Head of caudate nucleus (tissue), 42 donors: ENCODE measurements at regions of chr14 and their contacts with region 1.

Region 1: DNA sequence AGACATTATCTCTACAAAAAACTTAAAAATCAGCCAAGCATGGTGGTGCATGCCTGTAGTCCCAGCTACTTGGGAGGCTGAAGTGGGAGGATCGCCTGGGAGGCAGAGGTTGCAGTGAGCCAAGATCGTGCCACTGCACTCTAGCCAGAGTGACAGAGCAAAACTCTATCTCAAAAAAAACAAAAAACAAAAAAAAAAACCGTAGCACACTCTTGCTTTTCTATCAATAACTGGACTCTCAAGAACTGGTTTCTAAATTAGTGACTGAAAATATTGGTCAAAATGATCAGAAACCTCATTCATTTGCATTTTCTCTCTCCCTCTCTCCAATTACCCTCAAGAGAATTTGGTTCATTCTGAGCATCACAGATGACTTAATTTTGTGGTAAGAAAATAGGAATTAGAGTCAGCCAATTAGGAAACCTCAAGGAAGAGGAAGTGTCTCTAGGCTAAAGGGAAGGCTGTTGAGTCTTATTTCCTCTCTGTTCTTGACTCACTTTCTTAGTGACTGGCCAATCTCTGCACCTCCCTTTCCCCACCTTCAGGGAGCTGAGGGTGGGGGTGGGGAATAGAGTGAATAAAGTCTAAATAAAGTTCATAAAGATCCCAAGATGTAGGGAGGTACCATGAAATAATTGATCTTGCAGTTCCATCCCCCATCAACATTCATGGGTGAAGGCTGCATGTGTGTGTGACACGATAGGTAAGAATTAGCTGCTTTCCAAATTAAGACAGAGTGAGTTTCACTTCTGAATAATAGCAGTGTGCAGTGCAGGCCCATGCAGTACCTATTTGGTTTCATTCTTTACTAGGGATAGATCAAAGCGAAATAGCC is 6.8 kb upstream of the PSMA6 start:
- DNase-seq: no peak

Region 2: DNA sequence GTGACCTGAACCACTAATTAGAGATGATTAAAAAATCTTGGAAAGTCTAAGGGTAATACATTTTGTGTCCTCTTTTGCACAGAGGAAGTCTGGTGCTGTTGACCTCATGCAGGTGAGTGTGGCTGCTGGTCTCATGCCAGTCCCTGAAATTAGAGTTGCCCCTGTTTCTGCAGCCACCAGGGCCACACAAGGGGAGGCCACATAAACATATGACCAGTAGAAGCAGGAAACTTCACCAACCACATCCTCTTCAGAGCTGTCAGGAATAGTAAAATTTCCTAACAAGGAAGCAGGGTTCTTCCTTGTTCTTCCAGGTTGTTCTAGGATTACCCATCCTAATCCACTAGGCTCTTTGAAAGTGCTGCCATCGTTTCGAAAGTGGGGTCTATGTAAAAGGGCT is 35.1 kb after region 1 on chr14:
- intact Hi-C with region 1: no loop called
- DNase-seq: no peak

Region 3: GRCh38 chr14:35341446-35342159 is 56.2 kb after region 1 on chr14:
- intact Hi-C with region 1: loop called (anchors 5 kb)
- DNase-seq: peak; percentile 86 to 99 (median 96)